GM10248 (cell line): ENCODE measurements at regions of chr2 and their contacts with region 1.

Region 1: DNA sequence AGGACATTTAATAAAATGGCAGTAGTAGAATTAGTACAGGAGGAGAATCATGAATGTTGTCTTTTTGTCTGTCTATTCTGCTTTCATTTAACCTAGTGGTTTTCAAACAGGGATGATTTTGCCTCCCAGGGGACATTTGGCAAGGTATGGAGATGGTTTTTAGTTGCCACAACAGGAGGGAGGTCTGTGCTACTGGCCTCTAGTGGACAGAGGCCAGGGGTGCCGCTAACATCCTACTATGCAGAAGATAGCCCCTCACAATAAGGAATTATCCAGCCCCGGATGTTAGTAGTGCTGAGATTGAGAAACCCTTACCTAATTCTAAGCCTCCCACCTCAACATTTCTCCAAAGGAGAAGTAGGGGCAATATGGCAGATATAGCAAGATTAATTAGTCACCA is 18.3 kb downstream of the FASTKD2 start:
- DNase-seq: no peak
- CTCF ChIP-seq: peak; percentile 33

Region 2: DNA sequence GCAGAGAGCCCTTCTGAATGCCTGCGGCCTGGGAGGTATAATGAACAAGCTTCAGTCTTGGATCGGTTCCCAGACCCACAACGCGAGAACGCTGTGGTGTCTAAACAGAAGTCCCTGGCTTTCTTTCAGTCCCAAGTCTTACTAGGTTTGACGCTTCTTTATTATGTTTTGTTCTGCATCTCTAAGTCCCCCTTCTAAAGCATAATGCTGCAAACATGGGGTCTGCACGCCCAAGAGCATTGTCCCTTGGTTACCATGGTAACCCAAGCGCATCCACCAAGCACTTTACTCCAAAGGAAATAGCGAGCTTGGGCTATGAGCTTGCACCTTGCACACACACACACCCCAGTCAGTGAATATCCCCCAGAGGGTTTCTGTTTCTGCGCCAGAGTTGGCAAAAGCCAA is 891.5 kb before region 1 on chr2:
- CTCF ChIA-PET with region 1: no interaction called
- POLR2A ChIA-PET with region 1: no interaction called
- DNase-seq: no peak
- CTCF ChIP-seq: no peak

Region 3: DNA sequence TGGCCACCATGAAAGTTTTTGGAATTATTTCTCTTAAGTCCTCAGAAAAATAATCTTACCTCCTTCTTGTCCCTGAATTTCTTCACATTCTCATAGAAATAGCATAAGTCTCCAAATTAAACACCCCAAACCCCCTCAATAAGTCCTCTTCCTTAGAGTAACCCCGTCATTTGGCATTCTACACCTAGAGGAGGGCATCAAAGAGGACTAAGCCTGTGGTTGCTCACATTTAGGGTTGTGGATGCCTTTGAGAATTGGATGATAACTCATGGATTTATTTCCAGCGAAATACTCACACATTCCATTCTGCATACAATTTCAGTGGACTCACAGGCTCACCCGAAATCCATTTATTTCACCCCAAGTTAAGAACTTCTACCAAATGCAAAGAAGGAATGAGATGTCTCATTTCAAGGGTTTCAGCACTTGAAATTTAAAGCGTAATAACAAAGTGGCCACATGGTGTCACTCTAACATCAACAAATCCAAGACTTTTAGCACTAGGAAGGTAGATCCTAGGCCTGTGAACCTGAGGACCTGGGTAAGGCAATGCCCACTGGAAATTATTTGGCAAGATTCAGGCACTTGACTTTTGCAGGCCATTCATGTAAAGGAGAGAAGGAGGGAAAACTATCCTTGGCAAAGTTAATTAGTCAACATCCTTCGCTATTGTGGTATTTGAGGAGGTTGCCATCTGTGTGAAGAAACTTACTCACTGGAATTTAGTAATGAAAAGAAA is 90.2 kb before region 1 on chr2:
- CTCF ChIA-PET with region 1: interaction called, 16 read pairs
- POLR2A ChIA-PET with region 1: no interaction called
- DNase-seq: peak; percentile 58
- CTCF ChIP-seq: peak; percentile 61

Region 4: GRCh38 chr2:206736935-206737334 is 46.8 kb before region 1 on chr2:
- CTCF ChIA-PET with region 1: no interaction called
- POLR2A ChIA-PET with region 1: no interaction called
- DNase-seq: no peak
- CTCF ChIP-seq: no peak

Region 5: DNA sequence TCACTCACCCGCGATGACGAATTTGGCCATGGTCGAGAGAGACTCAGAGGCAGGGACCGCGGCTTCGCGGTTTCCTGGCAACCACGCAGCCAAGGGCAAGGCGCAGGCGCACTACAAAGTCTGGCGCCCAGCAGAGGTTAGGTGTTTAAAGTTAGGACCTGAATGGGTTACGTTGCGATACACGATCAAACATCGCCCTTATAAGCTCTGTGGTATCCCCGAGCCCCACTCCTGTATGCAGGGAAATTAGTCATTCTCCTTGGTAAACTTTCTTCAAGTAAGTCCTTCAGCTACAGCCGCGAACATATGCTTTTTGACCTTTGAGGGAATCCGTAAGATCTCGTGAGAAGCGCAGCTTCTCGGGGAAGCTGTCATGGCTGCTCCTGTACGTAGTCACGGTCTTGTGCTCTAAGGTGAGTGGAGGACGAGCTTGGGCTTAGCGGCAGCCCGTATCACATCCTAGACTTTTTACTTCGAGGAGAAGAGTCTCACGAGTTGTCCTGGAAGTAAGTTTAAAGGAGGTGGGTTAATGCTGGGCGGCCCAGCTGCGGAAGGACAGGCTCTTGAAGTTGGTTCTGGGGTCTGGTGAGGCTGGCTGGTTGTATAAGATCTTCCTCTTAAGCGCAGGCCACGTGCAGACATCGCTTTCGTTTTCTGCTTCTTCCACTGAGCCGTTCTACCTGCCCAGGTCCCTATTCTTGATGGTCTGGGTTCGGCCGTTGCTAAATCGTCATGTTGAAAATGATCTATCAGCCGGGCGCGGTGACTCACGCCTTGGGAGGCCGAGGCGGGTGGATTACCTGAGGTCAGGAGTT is 18.3 kb before region 1 on chr2 and contains the starts of genes FASTKD2 and MDH1B:
- CTCF ChIA-PET with region 1: interaction called, 16 read pairs
- POLR2A ChIA-PET with region 1: no interaction called
- DNase-seq: peak; percentile 85
- CTCF ChIP-seq: no peak

Region 6: DNA sequence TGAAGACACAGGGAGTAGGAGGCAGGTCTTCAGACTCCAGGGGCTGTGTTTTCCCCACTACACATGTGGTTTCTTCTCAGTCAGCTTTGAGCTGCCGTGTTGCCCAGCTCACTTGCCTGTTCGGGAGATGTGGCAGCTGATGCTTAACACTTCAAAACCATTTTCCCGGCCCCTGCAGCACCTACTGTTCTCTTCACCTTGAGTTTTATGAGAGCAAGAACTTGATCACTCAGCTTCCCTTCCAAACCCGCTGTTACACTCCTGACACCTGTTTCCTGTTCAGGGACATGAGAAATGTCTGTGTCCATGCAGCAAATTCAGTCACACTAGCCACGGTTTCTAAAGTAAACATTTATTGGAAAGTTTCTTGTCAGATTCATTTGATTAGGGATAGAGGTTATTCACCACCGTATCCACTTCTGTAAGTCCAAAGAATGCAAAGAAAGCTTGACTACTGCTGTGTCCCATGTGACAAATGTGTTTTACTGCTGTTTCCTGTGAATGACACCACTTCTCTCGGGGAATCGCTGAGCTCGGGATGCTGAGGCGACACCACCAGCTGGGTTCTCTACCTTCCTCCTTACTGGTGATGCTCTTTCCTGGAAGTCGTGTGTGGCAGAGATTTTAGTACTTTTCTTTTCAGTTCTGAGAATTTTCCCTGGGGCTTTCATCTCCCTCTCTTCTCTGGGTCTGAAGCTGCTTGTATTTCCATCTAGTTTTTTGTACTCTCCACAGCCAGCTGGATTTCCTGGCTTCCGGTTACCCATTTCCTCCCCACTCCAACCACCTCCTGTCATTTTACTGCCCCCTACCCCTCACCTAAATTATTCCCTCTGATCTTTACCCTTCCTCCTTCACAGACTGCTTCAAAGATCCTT is 290.3 kb after region 1 on chr2:
- CTCF ChIA-PET with region 1: no interaction called
- POLR2A ChIA-PET with region 1: no interaction called
- DNase-seq: peak; percentile 24
- CTCF ChIP-seq: no peak

Region 7: GRCh38 chr2:207423886-207424285 is 640.2 kb after region 1 on chr2:
- CTCF ChIA-PET with region 1: no interaction called
- POLR2A ChIA-PET with region 1: no interaction called
- DNase-seq: peak; percentile 34
- CTCF ChIP-seq: no peak